ENCODE measurements at regions of chr10 and their contacts with region 1.

Region 1: GRCh38 chr10:78004215-78005026 is 24.9 kb downstream of the POLR3A start:
- DNase-seq: peak; percentile 54 to 87 (median 82)
- H3K4me3 ChIP-seq: no peak overlapping the region
- H3K27ac ChIP-seq: peak overlapping the region in 4 of 5 donors; percentile 26 to 74 (median 53)
- H3K4me1 ChIP-seq: no peaks in the 10 kb centered on the region
- H3K27me3 ChIP-seq: no peaks in the 10 kb centered on the region
- CTCF ChIP-seq: peak in 3 of 6 experiments; percentile 18 to 32 (median 20)
- POLR2A ChIP-seq: no peak

Region 2: GRCh38 chr10:77801474-77802161 is 202.8 kb before region 1 on chr10:
- intact Hi-C with region 1: loop called in 1 of 2 experiments (anchors 10 kb)
- DNase-seq: peak; percentile 71 to 88 (median 85)
- H3K4me3 ChIP-seq: no peak overlapping the region
- H3K27ac ChIP-seq: peak overlapping the region; percentile 39 to 81 (median 63)
- H3K4me1 ChIP-seq: peaks cover 0 to 29% of the 10 kb centered on the region in 2 donors
- H3K27me3 ChIP-seq: no peaks in the 10 kb centered on the region
- CTCF ChIP-seq: no peak
- POLR2A ChIP-seq: peak in 1 of 2 donors; percentile 45

Region 3: DNA sequence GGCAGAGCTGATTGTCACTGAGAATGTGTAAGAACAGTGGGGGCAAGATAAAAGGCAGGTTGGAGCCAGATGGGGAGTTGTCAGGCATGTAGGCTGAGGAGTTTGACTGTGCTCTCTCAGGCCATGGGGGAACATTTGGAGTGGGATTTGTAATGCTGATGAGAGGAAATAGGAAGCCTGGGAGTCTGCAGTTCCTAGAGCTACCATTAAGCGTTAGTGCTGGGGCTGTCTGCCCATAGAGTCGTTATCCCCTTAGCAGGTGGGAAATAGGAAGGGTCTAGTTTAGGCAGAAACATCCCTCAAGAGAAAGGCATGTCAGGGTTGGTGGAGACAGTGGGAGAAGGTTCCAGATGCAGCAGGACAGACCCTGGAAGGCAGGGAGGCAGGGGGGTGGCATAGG is 104.8 kb after region 1 on chr10:
- intact Hi-C with region 1: no loop called
- DNase-seq: no peak
- H3K4me3 ChIP-seq: no peak overlapping the region
- H3K27ac ChIP-seq: no peak overlapping the region
- H3K4me1 ChIP-seq: no peaks in the 10 kb centered on the region
- H3K27me3 ChIP-seq: no peaks in the 10 kb centered on the region
- CTCF ChIP-seq: no peak
- POLR2A ChIP-seq: no peak